Kidney (tissue), 22 donors: ENCODE measurements at regions of chr11 and their contacts with region 1.

Region 1: GRCh38 chr11:36478700-36479329 is 31.3 kb downstream of the TRAF6 start:
- DNase-seq: peak in 3 of 5 donors; percentile 53 to 85 (median 81)
- H3K4me3 ChIP-seq: no peak overlapping the region
- H3K27ac ChIP-seq: no peak overlapping the region
- H3K4me1 ChIP-seq: no peaks in the 10 kb centered on the region
- H3K27me3 ChIP-seq: no peaks in the 10 kb centered on the region
- CTCF ChIP-seq: peak; percentile 75

Region 2: GRCh38 chr11:36292311-36292722 is 186.5 kb before region 1 on chr11:
- intact Hi-C with region 1: loop called (anchors 10 kb)
- DNase-seq: peak in 1 of 5 donors; percentile 25
- H3K4me3 ChIP-seq: no peak overlapping the region
- H3K27ac ChIP-seq: no peak overlapping the region
- H3K4me1 ChIP-seq: peaks cover 0 to 4% (median 0%) of the 10 kb centered on the region in 3 donors
- H3K27me3 ChIP-seq: no peaks in the 10 kb centered on the region
- CTCF ChIP-seq: peak; percentile 43

Region 3: GRCh38 chr11:36312611-36313472 is 166.0 kb before region 1 on chr11:
- intact Hi-C with region 1: no loop called
- DNase-seq: no peak
- H3K4me3 ChIP-seq: no peak overlapping the region
- H3K27ac ChIP-seq: no peak overlapping the region
- H3K4me1 ChIP-seq: peaks cover 0 to 10% (median 0%) of the 10 kb centered on the region in 3 donors
- H3K27me3 ChIP-seq: no peaks in the 10 kb centered on the region
- CTCF ChIP-seq: no peak

Region 4: GRCh38 chr11:36631774-36632173 is 153.0 kb after region 1 on chr11:
- intact Hi-C with region 1: no loop called
- DNase-seq: no peak
- H3K4me3 ChIP-seq: no peak overlapping the region
- H3K27ac ChIP-seq: no peak overlapping the region
- H3K4me1 ChIP-seq: no peaks in the 10 kb centered on the region
- H3K27me3 ChIP-seq: no peaks in the 10 kb centered on the region
- CTCF ChIP-seq: no peak